A549 (cell line): ENCODE measurements at regions of chr12 and their contacts with region 1.

Region 1: GRCh38 chr12:111160350-111161241 is 208.3 kb downstream of the PHETA1 start:
- DNase-seq: no peak
- ATAC-seq: peak in 1 of 2 experiments; percentile 32; a peak in 3 of 6 replicates
- H3K4me3 ChIP-seq: no peak overlapping the region
- H3K27ac ChIP-seq: no peak overlapping the region
- H3K4me1 ChIP-seq: no peaks in the 10 kb centered on the region
- CTCF ChIP-seq: no peak
- EP300 ChIP-seq: no peak
- POLR2A ChIP-seq: no peak
- RAD21 ChIP-seq: no peak

Region 2: DNA sequence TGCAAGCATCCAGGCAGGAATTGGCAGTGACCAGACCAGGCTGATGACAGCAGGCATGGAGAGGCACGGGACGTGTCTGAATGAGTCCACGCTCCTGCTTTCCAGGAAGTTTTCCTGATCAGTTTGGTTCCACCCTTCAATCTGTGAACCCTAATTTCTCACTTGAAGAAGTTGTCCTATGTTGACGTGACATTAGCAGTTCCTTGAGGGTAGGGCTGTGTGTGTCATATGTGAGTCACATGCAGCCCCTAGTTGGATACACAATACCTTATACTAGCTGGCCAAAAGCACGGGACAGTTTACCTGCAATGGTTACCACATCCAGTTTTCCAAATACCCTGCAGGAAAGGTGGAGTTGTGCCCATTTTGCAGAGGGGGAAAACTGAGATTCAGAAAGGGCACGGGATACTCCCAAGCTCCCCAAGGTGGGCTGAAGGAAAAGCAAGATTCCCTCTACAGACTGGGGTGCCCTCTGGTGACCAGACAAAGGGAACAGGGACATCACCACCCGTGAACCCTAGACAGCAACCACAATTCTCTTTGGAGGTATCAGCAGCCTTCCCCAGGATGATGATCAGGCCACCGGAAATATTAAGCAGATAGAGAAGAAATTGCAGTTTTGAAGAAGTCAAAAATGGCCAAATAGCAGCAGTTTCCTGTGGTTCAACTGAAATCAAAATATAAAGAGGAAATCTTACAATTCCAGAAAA is 13.8 kb after region 1 on chr12:
- CTCF ChIA-PET with region 1: interaction called, 31 read pairs
- POLR2A ChIA-PET with region 1: no interaction called
- DNase-seq: peak; percentile 27 to 35
- ATAC-seq: peak; percentile 38 to 72; a peak in 2 of 6 replicates
- H3K4me3 ChIP-seq: no peak overlapping the region
- H3K27ac ChIP-seq: no peak overlapping the region
- H3K4me1 ChIP-seq: no peaks in the 10 kb centered on the region
- CTCF ChIP-seq: peak; percentile 48
- EP300 ChIP-seq: no peak
- POLR2A ChIP-seq: no peak
- RAD21 ChIP-seq: peak; percentile 72 to 74